B cell (primary cell): ENCODE measurements at regions of chr11 and their contacts with region 1.

Region 1: GRCh38 chr11:109946322-109946846 is 146.8 kb upstream of the ZC3H12C start:
- DNase-seq: peak; percentile 79
- ATAC-seq: peak; percentile 92
- H3K4me3 ChIP-seq: peak overlapping the region in 3 of 5 experiments; percentile 25 to 50 (median 34)
- H3K4me3 Mint-ChIP-seq: peak overlapping the region; percentile 71
- H3K27ac ChIP-seq: no peak overlapping the region
- H3K27ac Mint-ChIP-seq: no peak overlapping the region
- H3K4me1 ChIP-seq: peaks cover 6 to 9% of the 10 kb centered on the region in 2 donors
- H3K4me1 Mint-ChIP-seq: peaks cover 7% of the 10 kb centered on the region
- H3K27me3 ChIP-seq: peaks cover 0 to 16% (median 1%) of the 10 kb centered on the region in 4 experiments
- H3K27me3 Mint-ChIP-seq: peaks cover 13% of the 10 kb centered on the region
- CTCF ChIP-seq: peak; percentile 88

Region 2: GRCh38 chr11:110092515-110093404 is 146.4 kb after region 1 on chr11 and contains the start of gene ZC3H12C:
- CTCF ChIA-PET with region 1: no interaction called
- POLR2A ChIA-PET with region 1: no interaction called
- intact Hi-C with region 1: loop called (anchors 1 kb)
- DNase-seq: peak; percentile 70
- ATAC-seq: peak; percentile 75
- H3K4me3 ChIP-seq: peak within 1 kb of the TSS; percentile 7 to 63 (median 47)
- H3K4me3 Mint-ChIP-seq: peak within 1 kb of the TSS; percentile 90
- H3K27ac ChIP-seq: no peak within 1 kb of the TSS
- H3K27ac Mint-ChIP-seq: no peak within 1 kb of the TSS
- H3K4me1 ChIP-seq: peaks cover 12 to 13% of the 10 kb centered on the region in 2 donors
- H3K4me1 Mint-ChIP-seq: peaks cover 12% of the 10 kb centered on the region
- H3K27me3 ChIP-seq: peaks cover 0 to 62% (median 50%) of the 10 kb centered on the region in 4 experiments
- H3K27me3 Mint-ChIP-seq: peaks cover 46% of the 10 kb centered on the region
- CTCF ChIP-seq: no peak
- total RNA-seq, gene ZC3H12C: 0.10 and 0.15 TPM in 2 replicates

Region 3: DNA sequence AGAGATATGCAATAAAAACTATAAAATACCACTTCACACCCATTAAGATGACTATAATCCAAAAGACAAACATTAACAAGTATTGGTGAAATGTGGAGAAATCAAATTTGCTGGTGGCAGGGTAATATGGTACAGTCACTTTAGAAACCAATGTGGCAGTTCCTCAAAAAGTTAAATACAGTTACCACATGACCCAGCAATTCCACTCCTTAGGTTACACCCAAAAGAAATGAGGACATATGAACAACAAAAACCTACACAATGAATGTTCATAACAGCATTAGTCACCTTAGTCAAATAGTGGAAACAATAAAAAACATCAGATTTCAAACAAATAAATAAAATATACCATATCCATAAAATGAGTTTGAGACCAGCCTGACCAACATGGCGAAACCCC is 297.4 kb after region 1 on chr11:
- CTCF ChIA-PET with region 1: no interaction called
- POLR2A ChIA-PET with region 1: no interaction called
- intact Hi-C with region 1: no loop called
- DNase-seq: no peak
- ATAC-seq: no peak
- H3K4me3 ChIP-seq: no peak overlapping the region
- H3K4me3 Mint-ChIP-seq: no peak overlapping the region
- H3K27ac ChIP-seq: no peak overlapping the region
- H3K27ac Mint-ChIP-seq: no peak overlapping the region
- H3K4me1 ChIP-seq: no peaks in the 10 kb centered on the region
- H3K4me1 Mint-ChIP-seq: no peaks in the 10 kb centered on the region
- H3K27me3 ChIP-seq: no peaks in the 10 kb centered on the region
- H3K27me3 Mint-ChIP-seq: no peaks in the 10 kb centered on the region
- CTCF ChIP-seq: no peak

Region 4: DNA sequence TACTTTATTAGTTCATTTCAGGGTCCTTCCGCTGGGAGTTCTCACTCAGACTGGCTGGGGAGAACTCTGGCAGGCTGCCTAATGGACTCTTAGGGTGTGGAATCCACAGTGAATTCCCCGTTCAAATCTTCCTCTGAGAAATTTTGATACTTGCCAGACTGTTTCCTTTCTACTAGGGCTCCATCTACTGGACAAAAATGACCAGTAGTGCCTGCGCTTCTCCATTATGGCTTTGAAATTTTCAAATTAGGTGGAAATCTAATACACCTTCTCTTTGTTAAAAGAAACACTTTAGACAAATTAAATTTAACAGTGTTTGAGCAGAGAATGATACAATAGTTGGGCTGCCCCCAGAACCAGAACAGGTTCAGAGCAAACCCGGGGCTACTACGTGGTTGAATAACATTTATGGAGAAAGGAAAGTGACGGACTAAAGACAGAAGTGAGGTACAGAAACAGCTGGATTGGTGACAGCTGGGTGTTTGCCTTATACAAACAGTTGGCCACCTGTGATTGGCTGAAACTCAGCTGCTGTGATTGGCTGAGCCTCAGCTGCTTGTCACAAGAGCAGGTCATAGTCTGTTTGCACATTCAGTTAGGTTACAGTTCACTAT is 430.4 kb after region 1 on chr11:
- CTCF ChIA-PET with region 1: interaction called, 3 read pairs
- POLR2A ChIA-PET with region 1: no interaction called
- intact Hi-C with region 1: loop called (anchors 1 kb)
- DNase-seq: peak; percentile 61
- ATAC-seq: peak; percentile 28
- H3K4me3 ChIP-seq: no peak overlapping the region
- H3K4me3 Mint-ChIP-seq: peak overlapping the region; percentile 35
- H3K27ac ChIP-seq: no peak overlapping the region
- H3K27ac Mint-ChIP-seq: no peak overlapping the region
- H3K4me1 ChIP-seq: peaks cover 0 to 3% of the 10 kb centered on the region in 2 donors
- H3K4me1 Mint-ChIP-seq: no peaks in the 10 kb centered on the region
- H3K27me3 ChIP-seq: peaks cover 0 to 3% (median 0%) of the 10 kb centered on the region in 4 experiments
- H3K27me3 Mint-ChIP-seq: peaks cover 3% of the 10 kb centered on the region
- CTCF ChIP-seq: peak; percentile 80